CD14-positive monocyte (primary cell): ENCODE measurements at regions of chr13 and their contacts with region 1.

Region 1: GRCh38 chr13:19863323-19864023 is at the start of gene ZMYM5:
- DNase-seq: peak; percentile 96 to 98 (median 97)
- H3K4me3 ChIP-seq: peak within 1 kb of the TSS; percentile 84 to 95 (median 90)
- H3K4me3 Mint-ChIP-seq: peak within 1 kb of the TSS; percentile 96
- H3K27ac ChIP-seq: peak within 1 kb of the TSS; percentile 92 to 96
- H3K27ac Mint-ChIP-seq: peak within 1 kb of the TSS; percentile 89 to 99 (median 95)
- H3K4me1 ChIP-seq: peaks cover 20 to 27% of the 10 kb centered on the region in 2 donors
- H3K4me1 Mint-ChIP-seq: peaks cover 24% of the 10 kb centered on the region
- H3K27me3 ChIP-seq: no peaks in the 10 kb centered on the region
- H3K27me3 Mint-ChIP-seq: peaks cover 0 to 1% (median 0%) of the 10 kb centered on the region in 3 donors
- CTCF ChIP-seq: no peak
- polyA plus RNA-seq, gene ZMYM5: 11.1 to 13.2 (median 11.1) TPM

Region 2: DNA sequence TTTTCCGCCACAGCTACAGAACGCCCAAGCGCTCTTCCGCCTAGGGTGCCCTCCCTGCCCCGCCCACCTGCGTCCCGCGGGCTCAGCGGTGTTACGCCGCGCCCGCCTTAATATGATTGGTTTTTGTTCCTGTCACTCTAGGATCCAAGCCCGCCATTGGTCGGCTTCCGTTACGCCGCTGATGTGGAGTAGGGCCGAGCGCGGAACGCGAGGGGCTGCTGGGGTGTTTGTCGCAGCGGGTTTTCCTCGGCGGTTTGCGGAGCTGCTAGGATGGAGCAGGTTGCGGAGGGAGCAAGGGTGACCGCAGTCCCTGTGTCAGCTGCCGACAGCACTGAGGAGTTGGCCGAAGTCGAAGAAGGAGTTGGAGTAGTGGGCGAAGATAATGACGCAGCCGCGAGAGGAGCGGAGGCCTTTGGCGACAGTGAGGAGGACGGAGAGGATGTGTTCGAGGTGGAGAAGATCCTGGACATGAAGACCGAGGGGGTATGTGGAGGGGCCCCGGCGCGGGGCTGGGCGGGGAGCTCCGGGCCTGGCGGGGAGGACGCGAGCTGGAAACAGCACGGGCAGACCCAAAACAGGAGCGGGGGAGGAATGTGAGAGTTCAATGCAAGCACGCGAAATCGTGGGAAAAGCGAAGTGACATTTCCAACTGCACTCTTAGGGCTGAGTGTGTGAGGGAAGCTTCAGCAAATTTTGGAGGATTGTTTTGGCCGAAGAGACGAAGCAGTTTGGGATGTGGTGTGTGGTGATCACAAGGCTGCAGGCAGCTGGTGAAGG is 229.8 kb before region 1 on chr13 and contains the start of gene MPHOSPH8:
- intact Hi-C with region 1: loop called in 1 of 2 experiments (anchors 5 kb)
- DNase-seq: peak; percentile 94 to 96 (median 96)
- H3K4me3 ChIP-seq: peak within 1 kb of the TSS; percentile 70 to 89 (median 81)
- H3K4me3 Mint-ChIP-seq: peak within 1 kb of the TSS; percentile 100
- H3K27ac ChIP-seq: peak within 1 kb of the TSS; percentile 71 to 96
- H3K27ac Mint-ChIP-seq: peak within 1 kb of the TSS; percentile 97 to 100 (median 99)
- H3K4me1 ChIP-seq: peaks cover 21 to 23% of the 10 kb centered on the region in 2 donors
- H3K4me1 Mint-ChIP-seq: peaks cover 22% of the 10 kb centered on the region
- H3K27me3 ChIP-seq: no peaks in the 10 kb centered on the region
- H3K27me3 Mint-ChIP-seq: no peaks in the 10 kb centered on the region
- CTCF ChIP-seq: no peak
- polyA plus RNA-seq, gene MPHOSPH8: 2.1 to 13.5 (median 5.3) TPM

Region 3: GRCh38 chr13:19782049-19782726 is 81.3 kb before region 1 on chr13:
- intact Hi-C with region 1: loop called (anchors 5 kb)
- DNase-seq: peak; percentile 26 to 62 (median 41)
- H3K4me3 ChIP-seq: peak overlapping the region; percentile 97 to 99 (median 98)
- H3K4me3 Mint-ChIP-seq: peak overlapping the region; percentile 94 to 97
- H3K27ac ChIP-seq: peak overlapping the region; percentile 98
- H3K27ac Mint-ChIP-seq: peak overlapping the region; percentile 95 to 98 (median 98)
- H3K4me1 ChIP-seq: peaks cover 12 to 16% of the 10 kb centered on the region in 2 donors
- H3K4me1 Mint-ChIP-seq: peaks cover 6% of the 10 kb centered on the region
- H3K27me3 ChIP-seq: no peaks in the 10 kb centered on the region
- H3K27me3 Mint-ChIP-seq: peaks cover 0 to 2% (median 2%) of the 10 kb centered on the region in 3 donors
- CTCF ChIP-seq: no peak

Region 4: DNA sequence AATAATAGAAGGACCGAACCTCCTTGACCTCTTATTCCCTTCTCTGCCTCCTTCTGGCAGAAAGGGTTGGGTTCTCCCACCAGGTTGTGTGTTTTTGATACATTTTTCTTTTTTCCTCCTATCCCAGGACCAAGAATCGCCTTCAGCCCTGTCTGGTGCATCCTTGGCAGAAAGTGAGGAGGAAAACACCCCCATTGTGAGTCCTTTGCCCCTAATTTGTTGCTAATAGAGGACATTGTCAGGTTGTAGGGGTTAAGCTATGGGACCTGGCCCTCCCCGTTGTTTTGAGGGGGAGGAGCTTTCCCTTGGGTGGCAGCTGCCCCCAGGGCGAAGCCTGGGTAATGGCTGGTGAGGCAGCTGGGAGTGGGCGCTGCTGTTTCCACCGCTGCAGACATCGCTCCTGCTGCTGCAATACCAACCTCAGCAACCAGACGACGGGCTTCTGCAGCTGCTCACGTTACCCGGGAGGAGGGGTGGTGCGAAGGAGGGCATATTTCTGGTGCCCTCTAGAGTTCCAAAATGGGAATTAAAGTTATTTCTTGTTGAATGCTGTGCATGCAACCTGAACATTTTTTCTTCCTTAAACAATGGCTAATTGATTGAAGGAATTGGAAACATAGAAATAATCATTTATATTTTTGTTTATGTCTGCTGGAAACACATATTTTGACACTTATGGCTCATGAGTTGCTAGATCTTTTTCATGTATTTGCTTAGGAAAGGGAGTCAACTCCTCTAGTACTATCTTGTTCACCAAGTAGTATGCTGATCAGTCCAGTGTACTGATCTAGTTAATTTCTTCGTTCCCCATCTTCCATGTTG is 96.6 kb after region 1 on chr13:
- intact Hi-C with region 1: loop called (anchors 2 to 5 kb)
- DNase-seq: peak; percentile 86 to 88 (median 88)
- H3K4me3 ChIP-seq: peak overlapping the region; percentile 91 to 99 (median 99)
- H3K4me3 Mint-ChIP-seq: peak overlapping the region; percentile 92 to 93
- H3K27ac ChIP-seq: peak overlapping the region; percentile 84 to 94
- H3K27ac Mint-ChIP-seq: peak overlapping the region; percentile 92 to 98 (median 94)
- H3K4me1 ChIP-seq: peaks cover 29 to 51% of the 10 kb centered on the region in 2 donors
- H3K4me1 Mint-ChIP-seq: peaks cover 32% of the 10 kb centered on the region
- H3K27me3 ChIP-seq: no peaks in the 10 kb centered on the region
- H3K27me3 Mint-ChIP-seq: no peaks in the 10 kb centered on the region
- CTCF ChIP-seq: peak; percentile 93